ENCODE measurements at regions of chr19 and their contacts with region 1.

Region 1: DNA sequence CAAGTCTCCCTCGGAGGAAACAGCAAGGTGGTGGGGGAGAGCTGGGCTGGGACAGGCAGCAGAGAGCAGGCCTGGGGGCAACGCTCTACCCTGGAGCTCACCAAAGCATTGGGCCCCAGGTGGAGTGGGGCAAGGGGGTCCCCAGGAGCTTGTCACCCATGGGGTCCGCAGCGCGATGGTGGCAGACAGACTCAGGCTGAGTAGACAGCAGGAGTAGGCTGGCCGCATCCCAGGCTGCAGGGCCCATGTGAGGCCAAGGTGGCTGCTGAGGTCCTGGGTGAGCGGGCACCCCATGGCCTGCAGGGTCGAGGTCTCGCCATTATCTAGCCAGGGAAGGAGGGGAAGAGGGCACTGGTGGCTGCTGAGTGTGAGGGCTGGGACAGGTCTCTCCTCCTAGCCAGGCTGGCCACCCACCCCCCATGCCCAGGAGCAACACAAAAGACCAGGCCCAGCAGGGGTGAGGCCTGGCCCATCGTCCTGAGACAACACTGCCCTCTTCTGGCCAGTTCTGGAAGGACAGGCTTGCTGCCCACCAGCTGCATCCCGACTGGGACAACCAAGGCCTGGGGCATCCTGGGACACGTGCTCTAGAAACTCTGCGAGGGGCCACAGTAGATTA is 33.1 kb downstream of the CEBPG start:
- DNase-seq: peak; percentile 85
- H3K4me3 ChIP-seq: no peak overlapping the region
- H3K27ac ChIP-seq: no peak overlapping the region
- H3K4me1 ChIP-seq: peaks cover 5% of the 10 kb centered on the region
- H3K27me3 ChIP-seq: no peaks in the 10 kb centered on the region
- CTCF ChIP-seq: peak; percentile 95

Region 2: GRCh38 chr19:33235269-33235995 is 171.2 kb before region 1 on chr19:
- intact Hi-C with region 1: loop called (anchors 2 kb)
- DNase-seq: peak; percentile 93
- H3K4me3 ChIP-seq: no peak overlapping the region
- H3K27ac ChIP-seq: no peak overlapping the region
- H3K4me1 ChIP-seq: no peaks in the 10 kb centered on the region
- H3K27me3 ChIP-seq: no peaks in the 10 kb centered on the region
- CTCF ChIP-seq: peak; percentile 91

Region 3: DNA sequence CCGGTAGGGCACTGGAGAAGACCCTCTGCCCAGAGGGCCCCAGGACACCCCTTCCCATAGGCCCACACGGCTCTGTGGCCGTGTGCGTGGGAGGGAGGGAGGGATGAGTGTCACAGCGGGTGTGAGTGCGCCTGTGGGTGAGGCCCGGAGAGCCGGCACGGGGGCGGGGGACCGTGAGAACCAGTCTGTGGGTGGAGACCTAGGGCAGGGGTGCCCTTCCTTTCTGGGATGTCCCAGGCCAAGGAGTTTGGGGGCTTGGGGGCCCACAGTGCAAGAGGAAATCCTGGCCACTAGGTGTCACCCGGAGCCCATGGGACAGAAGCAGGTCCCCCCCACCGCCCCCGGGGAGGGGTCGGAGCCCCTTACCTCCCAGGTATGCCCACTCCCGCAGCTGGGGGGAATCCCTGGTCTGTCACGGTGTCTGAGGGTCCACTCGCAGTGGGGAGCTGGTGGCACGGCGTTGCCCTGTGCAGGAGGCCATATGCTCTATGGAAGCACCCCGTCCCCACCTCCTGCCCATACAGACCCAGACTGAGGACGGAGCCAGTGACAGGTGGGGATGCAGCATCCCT is 165.0 kb before region 1 on chr19:
- intact Hi-C with region 1: loop called (anchors 2 kb)
- DNase-seq: peak; percentile 37
- H3K4me3 ChIP-seq: no peak overlapping the region
- H3K27ac ChIP-seq: no peak overlapping the region
- H3K4me1 ChIP-seq: peaks cover 9% of the 10 kb centered on the region
- H3K27me3 ChIP-seq: no peaks in the 10 kb centered on the region
- CTCF ChIP-seq: peak; percentile 58

Region 4: GRCh38 chr19:33302175-33302973 is 104.3 kb before region 1 on chr19 and contains the start of gene CEBPA:
- intact Hi-C with region 1: loop called (anchors 10 kb)
- DNase-seq: peak; percentile 82
- H3K4me3 ChIP-seq: peak within 1 kb of the TSS; percentile 87
- H3K27ac ChIP-seq: peak within 1 kb of the TSS; percentile 91
- H3K4me1 ChIP-seq: no peaks in the 10 kb centered on the region
- H3K27me3 ChIP-seq: no peaks in the 10 kb centered on the region
- CTCF ChIP-seq: no peak
- total RNA-seq, gene CEBPA: 67.1 to 76.4 TPM

Region 5: GRCh38 chr19:33316541-33317264 is 89.9 kb before region 1 on chr19:
- intact Hi-C with region 1: no loop called
- DNase-seq: peak; percentile 79
- H3K4me3 ChIP-seq: no peak overlapping the region
- H3K27ac ChIP-seq: peak overlapping the region; percentile 84
- H3K4me1 ChIP-seq: no peaks in the 10 kb centered on the region
- H3K27me3 ChIP-seq: no peaks in the 10 kb centered on the region
- CTCF ChIP-seq: no peak

Measured in colonic mucosa (tissue), 4 donors.